A549 (cell line): ENCODE measurements at regions of chr7 and their contacts with region 1.

Region 1: GRCh38 chr7:135672560-135673359 is 10.4 kb downstream of the STMP1 start:
- DNase-seq: peak; percentile 61 to 68
- ATAC-seq: peak; percentile 85 to 96
- H3K4me3 ChIP-seq: no peak overlapping the region
- H3K27ac ChIP-seq: no peak overlapping the region
- H3K4me1 ChIP-seq: peaks cover 3% of the 10 kb centered on the region; the same call in 2 of the 3 replicates
- CTCF ChIP-seq: peak; percentile 74
- EP300 ChIP-seq: no peak
- POLR2A ChIP-seq: no peak
- RAD21 ChIP-seq: peak; percentile 63 to 69

Region 2: GRCh38 chr7:135584362-135585353 is 88.1 kb before region 1 on chr7:
- CTCF ChIA-PET with region 1: no interaction called
- POLR2A ChIA-PET with region 1: no interaction called
- DNase-seq: no peak
- ATAC-seq: no peak
- H3K4me3 ChIP-seq: no peak overlapping the region
- H3K27ac ChIP-seq: no peak overlapping the region
- H3K4me1 ChIP-seq: no peaks in the 10 kb centered on the region
- CTCF ChIP-seq: no peak
- EP300 ChIP-seq: no peak
- POLR2A ChIP-seq: no peak
- RAD21 ChIP-seq: no peak

Region 3: DNA sequence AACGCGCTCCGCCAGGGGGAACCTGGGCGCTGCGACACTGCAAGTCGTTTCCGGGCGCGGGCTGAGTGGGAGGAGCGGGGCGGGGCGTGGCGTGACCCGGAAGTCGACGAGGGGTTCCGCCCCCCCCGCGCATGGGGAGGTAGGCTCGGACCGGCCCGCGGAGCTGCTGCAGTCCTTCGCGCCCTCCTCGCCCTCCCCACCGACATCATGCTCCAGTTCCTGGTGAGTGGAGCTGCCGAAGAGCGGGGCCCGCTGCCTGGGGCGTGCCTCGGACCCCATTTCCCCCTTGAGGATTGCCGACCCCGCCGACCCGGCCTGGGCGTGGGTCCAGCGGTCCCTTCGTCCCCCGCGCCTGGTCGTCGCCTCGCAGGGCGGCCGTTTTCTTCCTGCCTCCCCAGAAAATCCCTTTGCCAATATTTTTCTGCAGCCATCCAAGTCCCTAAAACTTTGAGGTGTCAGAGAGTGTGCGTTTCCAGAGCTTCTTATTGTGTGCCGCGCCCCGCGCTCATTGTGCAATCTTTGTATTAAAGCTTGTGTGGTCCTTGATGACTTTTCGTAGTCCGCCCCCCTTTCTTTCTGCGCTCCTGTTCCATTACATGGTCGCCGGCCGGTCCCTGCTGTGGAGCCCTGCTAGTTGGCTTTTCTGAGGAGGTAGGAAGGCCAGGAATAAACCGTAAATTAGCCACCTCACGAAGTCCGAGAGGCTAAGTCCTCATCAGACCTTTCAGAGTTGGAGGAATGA is 10.2 kb before region 1 on chr7 and contains the start of gene STMP1:
- CTCF ChIA-PET with region 1: interaction called, 32 read pairs
- POLR2A ChIA-PET with region 1: interaction called, 17 read pairs
- DNase-seq: peak; percentile 88 to 97
- ATAC-seq: peak; percentile 94 to 95
- H3K4me3 ChIP-seq: peak within 1 kb of the TSS; percentile 85
- H3K27ac ChIP-seq: peak within 1 kb of the TSS; percentile 91 to 93
- H3K4me1 ChIP-seq: peaks cover 17% of the 10 kb centered on the region; the same call in 2 of the 3 replicates
- CTCF ChIP-seq: no peak; the same call in 2 of the 3 replicates
- EP300 ChIP-seq: no peak
- POLR2A ChIP-seq: peak; percentile 96
- RAD21 ChIP-seq: peak; percentile 25 to 50; a peak in 3 of 5 replicates
- polyA plus RNA-seq, gene STMP1: 30.1 and 35.5 TPM in 2 replicates

Region 4: DNA sequence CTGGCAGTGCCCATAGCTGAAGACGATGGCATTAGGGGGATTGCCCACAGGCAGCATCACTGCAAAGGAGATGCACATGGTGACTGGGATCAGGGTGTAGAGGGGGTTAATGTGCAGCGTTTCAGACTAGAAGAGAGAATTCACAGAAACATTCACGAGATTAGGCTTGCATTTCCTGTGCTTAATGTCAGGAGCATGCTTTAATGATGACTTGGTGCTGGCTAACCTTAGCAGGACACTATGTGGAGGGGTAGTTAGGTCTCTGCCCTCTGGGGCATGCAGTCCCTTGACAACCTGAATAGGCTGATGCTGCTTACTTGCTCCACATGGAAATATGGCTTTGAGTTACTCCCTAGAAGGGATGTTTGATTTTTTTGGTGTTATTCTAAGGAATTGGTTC is 11.4 kb after region 1 on chr7:
- CTCF ChIA-PET with region 1: interaction called, 25 read pairs
- POLR2A ChIA-PET with region 1: interaction called, 4 read pairs
- DNase-seq: no peak
- ATAC-seq: peak in 1 of 2 experiments; percentile 25; a peak in 2 of 6 replicates
- H3K4me3 ChIP-seq: no peak overlapping the region
- H3K27ac ChIP-seq: no peak overlapping the region
- H3K4me1 ChIP-seq: no peaks in the 10 kb centered on the region
- CTCF ChIP-seq: no peak
- EP300 ChIP-seq: no peak
- POLR2A ChIP-seq: no peak
- RAD21 ChIP-seq: no peak

Region 5: DNA sequence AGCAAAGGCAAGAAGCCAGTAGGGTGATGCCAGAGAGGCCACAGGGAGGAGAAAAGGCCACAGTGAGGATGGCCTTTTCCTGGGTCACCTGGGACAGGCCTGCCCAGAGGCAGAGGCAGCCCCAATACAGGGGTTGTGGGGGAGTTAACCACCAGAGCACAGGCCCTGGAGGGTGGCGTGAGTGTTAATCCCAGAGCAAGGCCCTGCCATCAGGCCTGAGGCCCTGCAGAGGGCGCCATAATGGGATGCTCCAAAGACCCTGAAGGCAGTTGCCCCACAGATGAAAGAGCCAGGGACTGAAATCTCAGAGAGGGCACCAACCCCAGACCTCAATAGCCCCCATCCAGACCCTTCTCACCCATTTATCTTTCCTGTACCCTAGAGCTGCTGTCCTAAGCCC is 31.3 kb after region 1 on chr7:
- CTCF ChIA-PET with region 1: interaction called, 11 read pairs
- POLR2A ChIA-PET with region 1: no interaction called
- DNase-seq: peak in 1 of 2 experiments; percentile 14
- ATAC-seq: peak in 1 of 2 experiments; percentile 73; a peak in 3 of 6 replicates
- H3K4me3 ChIP-seq: no peak overlapping the region
- H3K27ac ChIP-seq: no peak overlapping the region
- H3K4me1 ChIP-seq: no peaks in the 10 kb centered on the region
- CTCF ChIP-seq: no peak
- EP300 ChIP-seq: no peak
- POLR2A ChIP-seq: no peak
- RAD21 ChIP-seq: no peak

Region 6: DNA sequence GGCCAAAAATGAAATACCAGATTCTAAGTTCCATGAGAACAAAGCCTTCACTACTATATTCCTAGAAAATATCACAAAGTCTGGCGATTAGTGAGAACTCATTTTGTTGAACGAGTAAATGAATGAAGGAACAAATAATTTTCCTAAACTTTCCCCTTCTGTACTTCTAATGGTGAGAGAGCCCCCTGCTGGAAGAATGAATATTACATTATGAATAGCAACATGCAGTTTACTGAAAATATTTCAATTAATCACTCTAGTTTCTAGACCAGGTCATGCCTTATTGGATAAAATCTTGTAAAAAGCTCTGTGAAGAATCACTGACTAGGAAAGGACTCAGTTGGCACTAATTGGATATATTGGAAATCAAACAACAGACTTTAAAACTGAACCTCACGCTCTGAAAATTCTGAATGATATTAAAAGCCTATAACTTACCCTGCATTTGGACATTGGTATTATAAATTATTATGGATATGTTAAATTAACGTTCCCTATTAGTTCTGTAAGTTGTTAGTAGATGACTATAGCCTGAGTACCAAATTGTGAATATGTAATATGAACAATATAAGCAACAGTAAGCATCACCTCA is 336.8 kb after region 1 on chr7:
- CTCF ChIA-PET with region 1: interaction called, 13 read pairs
- POLR2A ChIA-PET with region 1: no interaction called
- DNase-seq: peak; percentile 15 to 49
- ATAC-seq: peak in 1 of 2 experiments; percentile 70; a peak in 4 of 6 replicates
- H3K4me3 ChIP-seq: no peak overlapping the region
- H3K27ac ChIP-seq: no peak overlapping the region
- H3K4me1 ChIP-seq: no peaks in the 10 kb centered on the region
- CTCF ChIP-seq: peak; percentile 84
- EP300 ChIP-seq: no peak
- POLR2A ChIP-seq: no peak
- RAD21 ChIP-seq: peak; percentile 86 to 87